Activated naive CD4-positive, alpha-beta T cell treated with anti-CD3 and anti-CD28 coated beads, Interleukin-2, amount 10 ng/mL, durations not matched to agents 7 days and 5 days (primary cell): ENCODE measurements at regions of chr1 and their contacts with region 1.

Region 1: GRCh38 chr1:83931658-83932253 is 67.2 kb downstream of the TTLL7 start:
- DNase-seq: peak; percentile 25
- H3K4me3 Mint-ChIP-seq: no peak overlapping the region
- H3K27ac Mint-ChIP-seq: no peak overlapping the region
- H3K4me1 Mint-ChIP-seq: no peaks in the 10 kb centered on the region
- H3K27me3 Mint-ChIP-seq: no peaks in the 10 kb centered on the region

Region 2: GRCh38 chr1:84122780-84123382 is 191.1 kb after region 1 on chr1:
- CTCF ChIA-PET with region 1: interaction called, 24 read pairs
- DNase-seq: peak; percentile 71
- H3K4me3 Mint-ChIP-seq: no peak overlapping the region
- H3K27ac Mint-ChIP-seq: no peak overlapping the region
- H3K4me1 Mint-ChIP-seq: no peaks in the 10 kb centered on the region
- H3K27me3 Mint-ChIP-seq: no peaks in the 10 kb centered on the region

Region 3: DNA sequence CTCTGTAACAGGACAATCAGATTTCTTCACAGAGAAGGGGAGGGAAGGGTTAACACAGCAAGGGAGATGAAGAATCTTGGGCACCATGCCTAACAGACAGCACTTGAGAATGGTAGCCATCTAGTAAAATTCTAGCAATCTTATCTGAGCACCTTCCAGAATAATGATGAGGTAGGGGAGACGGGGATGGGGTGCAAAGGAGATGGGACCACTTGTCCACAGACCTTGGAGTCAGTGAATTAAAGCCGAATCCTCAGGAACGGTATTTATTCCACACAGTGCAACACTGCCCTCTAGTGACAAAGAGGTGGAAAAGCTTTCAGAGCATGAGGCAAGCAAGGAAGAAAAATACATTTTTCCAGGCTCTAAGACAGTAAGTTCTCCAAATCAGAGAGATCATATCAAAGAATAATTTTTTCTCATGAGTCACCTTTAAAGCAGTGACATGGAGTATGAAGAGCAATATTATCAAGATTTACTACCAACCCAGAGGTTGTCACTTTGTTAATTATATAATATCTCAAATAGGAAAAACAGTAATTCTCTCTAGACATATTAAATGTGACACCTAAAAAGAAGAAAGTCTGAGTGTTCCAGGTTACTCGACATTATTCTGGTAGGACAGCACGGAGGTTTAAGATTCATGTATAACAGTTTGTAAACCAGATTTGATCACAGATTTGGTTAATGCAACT is 1004.5 kb after region 1 on chr1:
- CTCF ChIA-PET with region 1: no interaction called
- DNase-seq: peak; percentile 49
- H3K4me3 Mint-ChIP-seq: no peak overlapping the region
- H3K27ac Mint-ChIP-seq: no peak overlapping the region
- H3K4me1 Mint-ChIP-seq: peaks cover 4% of the 10 kb centered on the region
- H3K27me3 Mint-ChIP-seq: peaks cover 5% of the 10 kb centered on the region